Astrocyte of the cerebellum (primary cell): ENCODE measurements at regions of chr20 and their contacts with region 1.

Region 1: DNA sequence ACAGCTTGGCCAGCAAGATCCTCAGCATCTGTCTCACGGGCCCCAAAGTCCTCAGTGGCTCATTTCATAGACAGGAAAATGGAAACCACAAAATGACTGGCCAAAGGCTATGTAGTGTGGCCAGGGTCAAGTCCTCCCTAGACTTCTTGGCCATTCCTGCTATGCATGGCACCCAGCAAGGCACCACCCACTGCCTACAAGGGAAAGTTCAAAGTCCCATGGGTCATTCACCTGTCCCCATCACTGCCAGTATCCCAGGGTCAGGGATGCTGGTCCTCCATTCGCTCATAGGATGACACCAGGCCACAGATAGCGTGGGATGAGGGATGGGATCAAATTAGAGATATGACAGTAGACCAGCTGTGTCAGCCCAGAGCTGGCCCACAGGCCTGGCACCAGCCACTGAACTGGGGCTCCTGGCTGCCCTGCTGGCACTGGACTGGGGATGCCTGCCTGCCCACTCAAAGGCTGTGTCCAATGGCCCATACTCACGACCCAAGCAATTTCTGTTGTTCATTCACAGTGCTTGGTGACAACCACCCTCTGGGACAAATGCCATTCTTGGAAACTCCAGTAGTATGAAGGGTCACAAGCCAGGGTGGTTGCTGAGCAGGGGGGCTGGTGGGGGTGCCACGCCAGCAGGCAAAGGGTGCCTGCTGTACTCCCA is 11.6 kb downstream of the ADISSP start:
- DNase-seq: no peak
- H3K4me3 ChIP-seq: no peak overlapping the region
- CTCF ChIP-seq: no peak

Region 2: GRCh38 chr20:3706774-3707507 is 49.0 kb before region 1 on chr20:
- in situ Hi-C with region 1: loop called (anchors 5 kb)
- DNase-seq: no peak
- H3K4me3 ChIP-seq: no peak overlapping the region
- CTCF ChIP-seq: no peak